Cardiac septum (tissue), 1 donor: ENCODE measurements at regions of chr10 and their contacts with region 1.

Region 1: GRCh38 chr10:60314069-60314940 is 75.4 kb downstream of the ANK3 start:
- DNase-seq: no peak

Region 2: GRCh38 chr10:59945664-59946390 is 368.5 kb before region 1 on chr10:
- intact Hi-C with region 1: no loop called
- DNase-seq: no peak

Region 3: GRCh38 chr10:60257767-60258428 is 56.4 kb before region 1 on chr10:
- intact Hi-C with region 1: no loop called
- DNase-seq: no peak

Region 4: GRCh38 chr10:60351191-60351853 is 37.0 kb after region 1 on chr10:
- intact Hi-C with region 1: loop called (anchors 5 kb)
- DNase-seq: no peak

Region 5: GRCh38 chr10:60555700-60556099 is 241.4 kb after region 1 on chr10:
- intact Hi-C with region 1: no loop called
- DNase-seq: no peak